IMR-90 (cell line): ENCODE measurements at regions of chr10 and their contacts with region 1.

Region 1: DNA sequence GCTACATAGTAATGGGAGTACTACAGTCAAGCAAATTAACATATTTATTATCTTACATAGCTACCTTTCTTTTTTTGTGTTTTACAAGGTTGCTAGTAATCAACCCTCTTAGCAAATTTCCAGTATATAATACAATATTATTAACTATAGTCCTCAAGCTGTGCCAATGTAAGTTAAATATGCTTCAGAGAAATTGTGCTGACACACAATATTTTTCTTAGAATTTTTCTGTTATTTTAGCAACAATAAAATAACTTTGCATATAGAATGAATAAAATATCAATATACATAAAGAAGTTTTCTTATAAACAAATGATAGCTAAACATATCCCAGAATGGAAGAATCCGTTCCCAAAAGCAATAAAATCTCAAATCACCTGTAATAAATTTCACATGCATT is 1605.1 kb downstream of the REEP3 start:
- DNase-seq: no peak
- ATAC-seq: no peak
- H3K4me3 ChIP-seq: no peak overlapping the region
- H3K27ac ChIP-seq: no peak overlapping the region
- H3K4me1 ChIP-seq: no peaks in the 10 kb centered on the region
- H3K27me3 ChIP-seq: no peaks in the 10 kb centered on the region
- CTCF ChIP-seq: no peak
- POLR2A ChIP-seq: no peak
- RAD21 ChIP-seq: no peak

Region 2: DNA sequence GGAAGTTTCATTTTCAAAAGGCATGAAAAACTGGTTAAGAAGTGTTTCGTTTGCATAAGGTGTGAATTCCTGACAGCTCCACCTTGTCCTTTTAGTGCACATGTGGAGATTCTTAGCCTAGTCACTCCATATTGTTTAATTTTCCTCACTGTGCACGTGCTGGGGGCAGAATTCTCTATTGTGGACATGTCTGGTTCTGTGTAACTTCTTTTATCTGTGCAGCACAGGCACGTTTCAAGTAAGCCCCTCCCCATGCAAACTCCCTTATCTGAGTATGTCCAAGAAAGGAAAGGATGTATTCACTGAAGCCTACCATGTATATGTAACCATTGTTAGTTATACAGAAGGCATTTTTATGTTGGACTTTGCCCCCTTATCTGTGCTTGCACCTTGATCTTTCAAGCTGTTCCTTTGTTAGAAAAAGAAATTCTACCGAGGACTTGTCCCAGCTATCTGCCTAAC is 258.8 kb before region 1 on chr10:
- CTCF ChIA-PET with region 1: no interaction called
- POLR2A ChIA-PET with region 1: no interaction called
- dilution Hi-C with region 1: no loop called
- in situ Hi-C with region 1: no loop called
- intact Hi-C with region 1: no loop called
- DNase-seq: no peak
- ATAC-seq: no peak
- H3K4me3 ChIP-seq: no peak overlapping the region
- H3K27ac ChIP-seq: no peak overlapping the region
- H3K4me1 ChIP-seq: no peaks in the 10 kb centered on the region
- H3K27me3 ChIP-seq: no peaks in the 10 kb centered on the region
- CTCF ChIP-seq: no peak
- POLR2A ChIP-seq: no peak
- RAD21 ChIP-seq: no peak

Region 3: DNA sequence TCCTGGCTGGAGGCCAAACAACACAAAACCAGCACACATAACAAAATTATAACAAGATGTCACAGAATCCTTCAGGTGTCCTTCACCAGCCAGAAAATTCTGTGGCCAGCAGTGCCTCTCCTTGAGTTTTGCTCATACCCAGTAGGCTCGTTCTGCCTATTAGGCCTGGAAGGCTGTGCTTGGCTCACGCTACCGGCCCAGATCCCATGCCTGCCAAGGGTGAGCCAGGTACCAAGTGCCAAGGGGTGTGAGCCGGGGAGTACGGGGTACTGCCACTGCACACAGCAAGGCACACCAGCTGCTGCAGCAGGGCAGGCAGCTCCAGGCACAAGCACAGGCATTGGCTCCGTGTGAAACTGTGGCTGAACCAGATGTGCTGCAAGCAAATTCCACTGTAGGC is 43.1 kb before region 1 on chr10:
- CTCF ChIA-PET with region 1: no interaction called
- POLR2A ChIA-PET with region 1: no interaction called
- dilution Hi-C with region 1: no loop called
- in situ Hi-C with region 1: no loop called
- intact Hi-C with region 1: loop called (anchors 1 kb)
- DNase-seq: no peak
- ATAC-seq: no peak
- H3K4me3 ChIP-seq: no peak overlapping the region
- H3K27ac ChIP-seq: no peak overlapping the region
- H3K4me1 ChIP-seq: no peaks in the 10 kb centered on the region
- H3K27me3 ChIP-seq: no peaks in the 10 kb centered on the region
- CTCF ChIP-seq: no peak
- POLR2A ChIP-seq: no peak
- RAD21 ChIP-seq: no peak